ENCODE measurements at regions of chr10 and their contacts with region 1.

Region 1: GRCh38 chr10:17730667-17731066 is 21.3 kb upstream of the TMEM236 start:
- DNase-seq: no peak
- H3K4me3 ChIP-seq: no peak overlapping the region
- H3K27ac ChIP-seq: no peak overlapping the region
- H3K4me1 ChIP-seq: no peaks in the 10 kb centered on the region
- H3K27me3 ChIP-seq: no peaks in the 10 kb centered on the region
- CTCF ChIP-seq: no peak
- POLR2A ChIP-seq: no peak

Region 2: GRCh38 chr10:17512341-17513001 is 218.2 kb before region 1 on chr10:
- intact Hi-C with region 1: no loop called
- DNase-seq: peak in 1 of 2 donors; percentile 23
- H3K4me3 ChIP-seq: no peak overlapping the region
- H3K27ac ChIP-seq: no peak overlapping the region
- H3K4me1 ChIP-seq: no peaks in the 10 kb centered on the region
- H3K27me3 ChIP-seq: no peaks in the 10 kb centered on the region
- CTCF ChIP-seq: no peak
- POLR2A ChIP-seq: no peak

Region 3: GRCh38 chr10:17637869-17638268 is 92.8 kb before region 1 on chr10:
- intact Hi-C with region 1: no loop called
- DNase-seq: no peak
- H3K4me3 ChIP-seq: no peak overlapping the region
- H3K27ac ChIP-seq: no peak overlapping the region
- H3K4me1 ChIP-seq: peaks cover 0 to 5% of the 10 kb centered on the region in 2 donors
- H3K27me3 ChIP-seq: no peaks in the 10 kb centered on the region
- CTCF ChIP-seq: no peak
- POLR2A ChIP-seq: no peak

Region 4: DNA sequence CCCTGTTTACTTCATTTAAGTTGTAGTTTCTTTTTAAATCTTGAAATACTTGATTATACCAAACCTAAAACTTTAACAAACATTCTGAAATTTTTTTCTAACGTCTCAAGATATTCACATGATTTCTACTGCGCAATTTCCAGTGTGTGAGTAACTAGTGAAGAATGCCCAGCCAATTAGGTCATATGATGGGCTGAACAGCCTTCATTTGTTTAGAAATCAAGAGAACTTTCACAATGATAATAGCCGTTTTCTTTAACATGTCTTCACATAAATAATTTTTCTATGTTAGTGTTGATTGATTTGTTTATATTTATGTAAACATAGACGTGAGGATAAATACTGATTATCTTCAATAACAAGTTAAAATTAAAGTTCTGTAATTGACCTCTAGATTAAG is 64.9 kb before region 1 on chr10:
- intact Hi-C with region 1: loop called (anchors 2 kb)
- DNase-seq: no peak
- H3K4me3 ChIP-seq: no peak overlapping the region
- H3K27ac ChIP-seq: peak overlapping the region; percentile 77 to 83
- H3K4me1 ChIP-seq: no peaks in the 10 kb centered on the region
- H3K27me3 ChIP-seq: no peaks in the 10 kb centered on the region
- CTCF ChIP-seq: no peak
- POLR2A ChIP-seq: no peak

Measured in breast epithelium (tissue), 4 donors.